ENCODE measurements at regions of chr12 and their contacts with region 1.

Region 1: DNA sequence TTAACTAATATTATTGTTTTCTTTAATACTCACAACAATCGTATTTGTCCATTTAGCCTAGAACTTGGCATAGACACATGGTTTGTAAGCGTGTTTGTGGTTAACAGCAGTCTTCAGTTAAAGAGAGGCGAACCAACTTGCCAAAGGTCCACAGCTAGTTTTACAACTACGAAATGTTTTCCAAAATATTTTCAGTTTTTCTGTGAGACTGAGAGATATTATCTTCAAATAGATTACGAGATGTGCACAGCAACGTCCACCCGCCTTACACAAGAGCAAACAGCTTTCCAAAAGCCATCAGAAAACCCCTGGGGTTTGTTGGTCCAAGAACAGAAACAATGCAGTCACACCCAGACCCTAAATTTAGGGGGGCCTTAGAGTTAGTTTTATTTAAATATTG is 58.6 kb upstream of the RASSF3 start:
- ATAC-seq: no peak
- H3K4me3 ChIP-seq: no peak overlapping the region
- H3K27ac ChIP-seq: no peak overlapping the region
- H3K4me1 ChIP-seq: no peaks in the 10 kb centered on the region

Region 2: GRCh38 chr12:64608901-64609535 is 57.3 kb after region 1 on chr12:
- in situ Hi-C with region 1: loop called in 1 of 9 experiments (anchors 10 kb)
- ATAC-seq: peak; percentile 2 to 31 (median 10)
- H3K4me3 ChIP-seq: peak overlapping the region; percentile 9 to 71 (median 53)
- H3K27ac ChIP-seq: no peak overlapping the region
- H3K4me1 ChIP-seq: peaks cover 6 to 16% of the 10 kb centered on the region in 2 donors

Measured in motor neuron (in vitro differentiated cells).